ENCODE measurements at regions of chr6 and their contacts with region 1.

Region 1: GRCh38 chr6:138773177-138774091 is at the start of gene CCDC28A:
- DNase-seq: peak; percentile 92

Region 2: GRCh38 chr6:138588805-138589434 is 184.5 kb before region 1 on chr6:
- in situ Hi-C with region 1: loop called (anchors 25 kb)
- DNase-seq: peak; percentile 65

Region 3: DNA sequence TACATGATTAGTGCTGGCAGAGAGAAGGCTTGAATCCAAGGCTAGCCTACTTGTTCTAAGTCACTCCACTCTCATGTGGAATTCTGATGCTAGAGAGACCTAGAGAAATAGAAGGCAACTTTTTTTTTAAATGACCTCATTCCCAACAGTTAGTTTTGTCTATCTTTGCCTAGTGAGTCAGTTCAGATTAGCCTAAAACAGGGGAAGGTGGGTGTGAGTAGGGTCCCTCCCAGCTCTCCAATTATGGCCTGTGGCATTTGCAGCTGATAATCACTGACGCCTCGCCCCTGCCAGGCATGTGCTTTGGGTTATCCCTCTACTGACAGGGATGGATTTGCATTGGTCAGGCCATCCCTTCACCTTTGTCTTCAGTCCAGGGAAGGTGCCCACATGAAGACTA is 504.8 kb after region 1 on chr6:
- in situ Hi-C with region 1: no loop called
- DNase-seq: no peak

Measured in ACHN (cell line).